Heart left ventricle (tissue), 16 donors: ENCODE measurements at regions of chr15 and their contacts with region 1.

Region 1: GRCh38 chr15:70327856-70328678 is 230.3 kb upstream of the TLE3 start:
- DNase-seq: peak in 4 of 5 donors; percentile 56 to 77 (median 69)
- ATAC-seq: peak; percentile 41 to 88 (median 75)
- H3K4me3 ChIP-seq: no peak overlapping the region
- H3K27ac ChIP-seq: peak overlapping the region in 5 of 12 donors; percentile 8 to 66 (median 40)
- H3K4me1 ChIP-seq: peaks cover 0 to 46% (median 20%) of the 10 kb centered on the region in 12 donors
- H3K27me3 ChIP-seq: no peaks in the 10 kb centered on the region
- CTCF ChIP-seq: no peak
- POLR2A ChIP-seq: no peak

Region 2: DNA sequence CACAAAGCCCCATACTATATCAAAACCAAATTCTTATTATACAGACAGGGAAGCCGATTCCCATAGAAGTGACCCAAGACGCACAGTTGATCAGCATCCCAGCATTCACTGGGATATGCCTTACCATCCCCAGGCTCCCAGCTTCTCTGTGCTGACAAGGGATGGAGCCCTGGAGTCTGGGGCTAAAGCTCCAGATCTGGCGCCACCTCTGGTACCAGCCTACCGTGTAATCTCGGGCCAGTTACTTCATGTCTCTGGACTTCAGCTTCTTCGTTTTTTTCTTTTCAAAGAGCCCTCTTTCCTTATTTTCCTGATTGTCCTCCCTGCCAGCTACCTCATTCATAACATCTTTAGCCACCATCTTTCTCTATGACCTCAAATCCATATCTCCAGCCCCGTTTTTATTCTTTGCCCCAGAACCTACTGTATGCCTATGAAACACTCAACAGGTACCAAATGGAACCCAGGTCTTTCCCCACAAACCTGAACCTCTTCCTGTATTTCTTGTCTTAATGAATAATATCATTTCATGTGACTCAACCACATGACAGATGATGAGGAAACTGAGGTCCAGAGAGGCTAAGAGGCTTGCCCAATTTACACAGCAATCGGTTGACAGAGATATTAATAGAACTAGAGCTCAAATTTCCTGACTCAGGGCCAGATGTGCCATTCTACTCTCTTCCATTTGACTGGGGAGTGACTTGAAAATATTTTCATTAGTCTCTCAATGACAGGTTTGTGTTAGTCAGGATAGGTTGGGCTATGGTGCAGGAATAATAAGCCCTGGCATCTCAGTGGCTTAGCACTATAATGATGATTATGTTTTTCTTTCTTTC is 145.0 kb before region 1 on chr15:
- intact Hi-C with region 1: loop called in 1 of 10 experiments (anchors 10 kb)
- DNase-seq: no peak
- ATAC-seq: no peak
- H3K4me3 ChIP-seq: no peak overlapping the region
- H3K27ac ChIP-seq: no peak overlapping the region
- H3K4me1 ChIP-seq: peaks cover 0 to 7% (median 0%) of the 10 kb centered on the region in 12 donors
- H3K27me3 ChIP-seq: peaks cover 0 to 5% (median 0%) of the 10 kb centered on the region in 9 donors
- CTCF ChIP-seq: no peak
- POLR2A ChIP-seq: no peak